Posterior vena cava (tissue), 2 donors: ENCODE measurements at regions of chr16 and their contacts with region 1.

Region 1: GRCh38 chr16:72226136-72226535 is 54.2 kb upstream of the PMFBP1 start:
- DNase-seq: no peak

Region 2: DNA sequence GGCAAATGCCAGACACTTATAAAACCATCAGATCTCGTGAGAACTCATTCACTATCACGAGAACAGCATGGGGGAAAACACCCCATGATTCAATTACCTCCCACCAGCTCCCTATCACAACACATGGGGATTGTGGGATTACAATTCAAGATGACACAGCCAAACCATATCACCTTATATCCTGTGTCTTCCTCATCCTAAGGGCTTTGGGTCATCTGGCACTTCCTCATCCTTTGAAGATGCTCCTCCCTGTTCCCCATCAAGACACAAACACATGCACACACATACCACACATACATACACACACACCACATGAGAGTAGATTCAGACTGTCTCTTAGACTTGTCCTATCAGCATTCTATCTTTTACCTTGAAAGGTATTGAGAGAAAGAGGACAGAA is 51.4 kb before region 1 on chr16:
- intact Hi-C with region 1: loop called in 1 of 2 experiments (anchors 2 kb)
- DNase-seq: no peak

Region 3: DNA sequence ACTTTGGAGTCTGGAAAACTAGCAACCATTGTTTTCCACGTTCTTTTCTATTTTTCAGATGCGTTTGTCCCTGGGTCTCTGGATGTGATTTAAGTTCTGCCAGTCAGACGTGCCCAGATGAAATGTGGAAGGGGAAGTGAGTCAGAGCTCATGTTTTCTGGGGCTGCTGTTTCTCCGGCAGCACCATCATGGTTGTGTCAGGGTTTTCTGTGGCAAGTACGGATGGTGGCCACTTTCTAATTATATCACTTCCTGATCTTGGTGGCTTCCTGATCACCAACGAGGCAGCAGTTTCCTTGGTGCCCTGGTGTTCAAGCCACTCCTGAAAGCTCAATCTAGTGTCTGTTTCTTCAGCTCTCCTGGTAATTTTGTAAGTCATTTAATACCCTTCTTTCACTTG is 22.7 kb before region 1 on chr16:
- intact Hi-C with region 1: no loop called
- DNase-seq: no peak